ENCODE measurements at regions of chr15 and their contacts with region 1.

Region 1: GRCh38 chr15:83066734-83067637 is at the start of gene BTBD1:
- DNase-seq: peak; percentile 96
- H3K4me3 ChIP-seq: peak within 1 kb of the TSS; percentile 65 to 96 (median 80)
- H3K27ac ChIP-seq: peak within 1 kb of the TSS; percentile 91 to 99 (median 96)
- H3K4me1 ChIP-seq: peaks cover 0 to 45% (median 44%) of the 10 kb centered on the region in 4 donors
- H3K27me3 ChIP-seq: no peaks in the 10 kb centered on the region
- CTCF ChIP-seq: no peak
- EP300 ChIP-seq: no peak
- POLR2A ChIP-seq: peak; percentile 27 to 72
- total RNA-seq, gene BTBD1: 64.2 to 82.4 (median 71.3) TPM

Region 2: GRCh38 chr15:83011271-83012075 is 55.5 kb before region 1 on chr15 and contains the start of gene C15orf40:
- intact Hi-C with region 1: loop called (anchors 1 kb)
- DNase-seq: peak; percentile 95
- H3K4me3 ChIP-seq: peak within 1 kb of the TSS; percentile 79 to 97 (median 87)
- H3K27ac ChIP-seq: peak within 1 kb of the TSS; percentile 84 to 88 (median 84)
- H3K4me1 ChIP-seq: peaks cover 0 to 34% (median 18%) of the 10 kb centered on the region in 4 donors
- H3K27me3 ChIP-seq: no peaks in the 10 kb centered on the region
- CTCF ChIP-seq: peak; percentile 51 to 54 (median 52)
- EP300 ChIP-seq: no peak
- POLR2A ChIP-seq: peak; percentile 61 to 67
- total RNA-seq, gene C15orf40: 9.1 to 14.6 (median 12.0) TPM

Region 3: DNA sequence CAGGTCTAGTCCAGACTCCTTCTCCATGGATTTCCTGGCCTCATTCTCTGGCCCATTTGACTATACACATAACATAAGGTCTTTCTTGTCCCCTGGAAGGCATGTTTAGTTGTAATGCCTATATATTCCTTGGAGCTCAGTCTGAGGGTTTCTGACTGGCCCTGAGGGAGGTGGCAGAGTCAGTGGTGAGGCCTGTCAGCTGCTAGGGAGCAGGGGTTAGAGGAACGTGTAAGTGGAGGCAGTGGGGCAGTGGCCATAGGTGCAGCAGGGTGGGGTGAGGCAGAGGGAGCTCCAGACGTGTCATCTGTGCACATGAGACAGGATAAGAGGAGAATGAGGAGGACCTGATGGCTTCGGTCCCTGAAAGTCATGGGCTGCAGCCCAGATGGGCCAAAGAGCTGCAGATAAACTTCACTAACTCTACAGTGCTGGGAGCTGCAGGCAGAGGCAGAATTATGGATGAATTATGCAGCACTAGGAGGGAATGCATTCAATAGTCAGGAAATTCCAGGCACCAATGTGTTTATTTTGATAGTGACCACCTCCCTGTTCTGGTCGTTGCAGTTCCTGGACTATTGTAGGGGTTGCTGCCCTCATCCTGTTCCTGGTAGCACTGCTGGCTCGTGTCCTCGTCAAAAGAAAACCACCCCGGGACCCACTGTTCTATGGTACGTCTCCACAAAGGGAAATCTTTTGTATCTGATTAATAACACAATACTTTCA is 45.4 kb after region 1 on chr15:
- intact Hi-C with region 1: no loop called
- DNase-seq: no peak
- H3K4me3 ChIP-seq: no peak overlapping the region
- H3K27ac ChIP-seq: peak overlapping the region in 2 of 4 donors; percentile 12 to 20
- H3K4me1 ChIP-seq: peaks cover 0 to 11% (median 8%) of the 10 kb centered on the region in 4 donors
- H3K27me3 ChIP-seq: peaks cover 5 to 30% (median 24%) of the 10 kb centered on the region in 3 donors
- CTCF ChIP-seq: no peak
- EP300 ChIP-seq: no peak
- POLR2A ChIP-seq: no peak

Region 4: DNA sequence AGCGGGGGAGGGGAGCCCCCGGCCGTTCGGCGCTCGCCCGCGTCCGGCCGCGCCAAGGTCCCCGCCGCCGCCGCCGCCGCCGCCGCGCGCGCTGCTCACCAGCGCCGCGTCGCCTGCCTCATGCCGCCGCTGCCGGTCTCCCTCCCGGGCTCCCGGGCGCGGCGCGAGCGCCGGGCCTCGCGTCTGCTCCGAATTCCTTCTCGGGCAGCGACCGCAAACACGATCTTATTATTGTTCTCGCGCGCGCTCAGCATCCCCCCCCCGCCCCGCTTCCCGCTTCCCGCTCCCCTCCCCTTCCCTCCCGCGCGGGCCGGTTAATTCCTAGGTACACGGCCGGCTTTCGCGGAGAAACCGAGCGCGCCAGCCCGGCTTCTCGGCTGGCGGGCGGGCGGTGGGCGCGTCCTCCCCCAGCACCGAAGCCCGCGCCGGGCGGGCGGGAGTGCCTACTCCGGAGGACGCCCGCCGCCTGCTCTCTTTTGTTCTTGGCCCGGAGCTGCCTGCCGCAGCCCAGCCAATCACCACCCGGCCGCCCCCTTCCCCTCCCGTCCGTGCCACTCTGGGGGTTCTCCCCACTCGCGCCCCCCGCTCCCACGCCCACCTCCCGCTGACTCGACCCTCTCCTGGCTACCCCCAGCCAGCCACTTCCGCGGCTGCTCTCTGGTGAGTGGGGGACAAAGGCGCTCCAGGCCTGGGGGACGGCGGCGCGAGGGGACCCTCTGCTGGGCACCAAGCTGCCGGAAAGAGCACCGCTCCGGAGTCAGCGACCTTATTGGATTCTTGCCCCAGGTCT is 140.8 kb after region 1 on chr15 and contains the start of gene HDGFL3:
- intact Hi-C with region 1: loop called (anchors 2 kb)
- DNase-seq: peak; percentile 81
- H3K4me3 ChIP-seq: peak within 1 kb of the TSS; percentile 82 to 96 (median 93)
- H3K27ac ChIP-seq: peak within 1 kb of the TSS; percentile 93 to 98 (median 96)
- H3K4me1 ChIP-seq: peaks cover 0 to 43% (median 31%) of the 10 kb centered on the region in 4 donors
- H3K27me3 ChIP-seq: no peaks in the 10 kb centered on the region
- CTCF ChIP-seq: no peak
- EP300 ChIP-seq: no peak
- POLR2A ChIP-seq: no peak
- total RNA-seq, gene HDGFL3: 58.0 to 83.6 (median 66.9) TPM